ENCODE measurements at regions of chr22 and their contacts with region 1.

Region 1: DNA sequence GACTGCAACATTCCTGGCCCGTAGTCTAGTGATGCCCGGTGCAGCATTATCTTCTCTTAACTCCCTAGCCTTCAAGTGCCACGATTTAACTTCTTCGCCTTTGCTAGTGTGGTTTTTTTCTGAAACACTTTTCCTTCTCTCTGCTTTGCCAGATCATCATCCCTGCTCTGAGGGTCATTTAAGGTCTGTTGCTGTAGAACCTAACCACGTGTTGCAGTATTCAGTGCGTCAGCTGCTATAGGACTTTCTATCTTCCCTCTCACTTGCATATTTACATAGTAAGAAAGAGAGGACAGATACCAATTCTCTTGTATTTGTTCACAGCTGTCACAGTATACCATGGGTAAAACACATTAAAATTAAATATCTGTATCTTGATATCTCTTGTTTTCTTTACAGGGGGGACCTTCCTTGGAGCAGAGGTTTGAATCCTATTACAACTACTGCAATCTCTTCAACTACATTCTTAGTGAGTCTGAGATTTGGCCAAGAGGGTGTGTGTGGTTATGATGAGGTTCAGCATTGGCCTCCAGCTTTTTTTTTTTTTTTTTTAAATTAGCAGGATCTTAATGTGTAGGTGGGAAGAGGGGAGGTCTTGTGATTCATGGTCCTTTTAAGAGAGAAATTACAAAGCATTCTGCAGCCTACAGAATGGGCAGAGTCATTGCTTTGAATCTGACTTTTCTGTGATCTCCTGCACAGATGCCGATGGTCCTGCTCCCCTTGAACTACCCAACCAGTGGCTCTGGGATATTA is 13.5 kb downstream of the EIF3L start:
- DNase-seq: no peak
- H3K4me3 Mint-ChIP-seq: no peak overlapping the region
- H3K27ac Mint-ChIP-seq: peak overlapping the region; percentile 49
- H3K4me1 Mint-ChIP-seq: peaks cover 10% of the 10 kb centered on the region
- H3K27me3 Mint-ChIP-seq: no peaks in the 10 kb centered on the region
- CTCF ChIP-seq: no peak

Region 2: GRCh38 chr22:37581504-37581903 is 281.2 kb before region 1 on chr22:
- CTCF ChIA-PET with region 1: no interaction called
- POLR2A ChIA-PET with region 1: no interaction called
- intact Hi-C with region 1: no loop called
- DNase-seq: no peak
- H3K4me3 Mint-ChIP-seq: no peak overlapping the region
- H3K27ac Mint-ChIP-seq: no peak overlapping the region
- H3K4me1 Mint-ChIP-seq: no peaks in the 10 kb centered on the region
- H3K27me3 Mint-ChIP-seq: no peaks in the 10 kb centered on the region
- CTCF ChIP-seq: no peak

Region 3: GRCh38 chr22:37817705-37818408 is 44.9 kb before region 1 on chr22:
- CTCF ChIA-PET with region 1: interaction called, 60 read pairs
- POLR2A ChIA-PET with region 1: no interaction called
- intact Hi-C with region 1: loop called (anchors 1 kb)
- DNase-seq: peak; percentile 71
- H3K4me3 Mint-ChIP-seq: no peak overlapping the region
- H3K27ac Mint-ChIP-seq: no peak overlapping the region
- H3K4me1 Mint-ChIP-seq: peaks cover 6% of the 10 kb centered on the region
- H3K27me3 Mint-ChIP-seq: no peaks in the 10 kb centered on the region
- CTCF ChIP-seq: peak; percentile 92

Region 4: DNA sequence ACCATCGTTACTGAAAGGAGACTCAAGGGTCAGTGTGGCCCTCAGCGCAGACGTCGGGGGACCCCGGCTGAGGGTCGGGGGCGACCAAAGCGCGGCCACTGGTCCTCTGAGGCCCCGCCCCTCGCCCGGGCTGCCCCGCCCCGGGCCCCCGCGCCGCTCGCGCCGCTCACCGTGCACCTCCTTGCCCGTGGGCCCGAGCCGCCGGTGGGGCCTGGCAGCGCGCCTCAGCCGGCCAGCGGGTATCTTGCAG is 19.1 kb before region 1 on chr22:
- CTCF ChIA-PET with region 1: interaction called, 78 read pairs
- POLR2A ChIA-PET with region 1: interaction called, 11 read pairs
- intact Hi-C with region 1: no loop called
- DNase-seq: peak; percentile 17
- H3K4me3 Mint-ChIP-seq: peak overlapping the region; percentile 82
- H3K27ac Mint-ChIP-seq: no peak overlapping the region
- H3K4me1 Mint-ChIP-seq: peaks cover 5% of the 10 kb centered on the region
- H3K27me3 Mint-ChIP-seq: no peaks in the 10 kb centered on the region
- CTCF ChIP-seq: no peak

Region 5: GRCh38 chr22:37849089-37849751 is 13.5 kb before region 1 on chr22 and contains the start of gene EIF3L:
- CTCF ChIA-PET with region 1: interaction called, 78 read pairs
- POLR2A ChIA-PET with region 1: interaction called, 15 read pairs
- intact Hi-C with region 1: no loop called
- DNase-seq: peak; percentile 89
- H3K4me3 Mint-ChIP-seq: peak within 1 kb of the TSS; percentile 96
- H3K27ac Mint-ChIP-seq: peak within 1 kb of the TSS; percentile 99
- H3K4me1 Mint-ChIP-seq: peaks cover 24% of the 10 kb centered on the region
- H3K27me3 Mint-ChIP-seq: no peaks in the 10 kb centered on the region
- CTCF ChIP-seq: no peak
- total RNA-seq, gene EIF3L: 395 and 505 TPM in 2 replicates

Region 6: GRCh38 chr22:37880668-37881440 is 18.1 kb after region 1 on chr22:
- CTCF ChIA-PET with region 1: interaction called, 44 read pairs
- POLR2A ChIA-PET with region 1: interaction called, 3 read pairs
- intact Hi-C with region 1: no loop called
- DNase-seq: peak; percentile 40
- H3K4me3 Mint-ChIP-seq: no peak overlapping the region
- H3K27ac Mint-ChIP-seq: no peak overlapping the region
- H3K4me1 Mint-ChIP-seq: no peaks in the 10 kb centered on the region
- H3K27me3 Mint-ChIP-seq: no peaks in the 10 kb centered on the region
- CTCF ChIP-seq: no peak

Measured in MCF 10A (cell line).